ENCODE measurements at regions of chr18 and their contacts with region 1.

Region 1: DNA sequence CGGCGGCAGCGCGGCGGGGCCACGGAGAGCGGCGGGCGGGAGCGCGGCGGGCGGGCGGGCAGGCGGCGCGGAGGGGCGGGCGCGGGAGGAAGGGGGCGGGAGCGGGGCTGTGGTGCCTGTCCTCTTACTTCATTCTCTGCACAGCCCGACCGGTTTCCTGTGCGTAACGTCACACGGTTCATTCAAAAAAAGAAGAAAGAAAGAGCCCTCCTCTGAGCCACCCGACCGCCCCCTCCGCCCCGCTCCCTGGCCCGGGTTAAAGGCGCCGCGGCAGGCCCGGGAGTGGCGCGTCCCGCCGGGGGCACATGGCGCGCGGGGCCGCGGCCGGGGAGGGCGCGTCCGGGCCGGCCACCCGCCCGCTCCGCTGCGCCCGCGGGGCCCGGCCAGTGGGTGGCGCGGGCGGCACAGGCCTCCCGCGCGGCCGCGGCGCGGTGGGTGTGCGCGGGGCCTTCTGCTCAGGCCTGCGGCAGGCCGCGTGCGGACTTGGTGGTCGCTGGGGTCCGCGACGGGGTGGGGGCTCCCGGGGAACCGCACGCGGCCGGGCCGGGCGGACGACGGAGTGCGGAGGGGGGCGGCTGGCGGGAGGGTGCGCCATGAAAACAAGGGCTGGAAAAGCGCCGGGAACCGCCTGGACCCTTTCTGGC is 599 bp upstream of the BCL2 start:
- DNase-seq: peak; percentile 93
- ATAC-seq: peak; percentile 75
- H3K4me3 ChIP-seq: peak overlapping the region in 4 of 5 experiments; percentile 51 to 98 (median 88)
- H3K4me3 Mint-ChIP-seq: peak overlapping the region; percentile 95
- H3K27ac ChIP-seq: peak overlapping the region; percentile 52 to 92
- H3K27ac Mint-ChIP-seq: peak overlapping the region; percentile 96
- H3K4me1 ChIP-seq: peaks cover 18 to 34% of the 10 kb centered on the region in 2 donors
- H3K4me1 Mint-ChIP-seq: peaks cover 44% of the 10 kb centered on the region
- H3K27me3 ChIP-seq: no peaks in the 10 kb centered on the region
- H3K27me3 Mint-ChIP-seq: no peaks in the 10 kb centered on the region
- CTCF ChIP-seq: no peak

Region 2: GRCh38 chr18:63016270-63016669 is 303.9 kb before region 1 on chr18:
- CTCF ChIA-PET with region 1: interaction called, 223 read pairs
- POLR2A ChIA-PET with region 1: no interaction called
- intact Hi-C with region 1: no loop called
- DNase-seq: peak; percentile 74
- ATAC-seq: peak; percentile 60
- H3K4me3 ChIP-seq: no peak overlapping the region
- H3K4me3 Mint-ChIP-seq: no peak overlapping the region
- H3K27ac ChIP-seq: no peak overlapping the region
- H3K27ac Mint-ChIP-seq: no peak overlapping the region
- H3K4me1 ChIP-seq: no peaks in the 10 kb centered on the region
- H3K4me1 Mint-ChIP-seq: no peaks in the 10 kb centered on the region
- H3K27me3 ChIP-seq: no peaks in the 10 kb centered on the region
- H3K27me3 Mint-ChIP-seq: peaks cover 21% of the 10 kb centered on the region
- CTCF ChIP-seq: peak; percentile 86

Region 3: GRCh38 chr18:63131106-63131958 is 188.8 kb before region 1 on chr18:
- CTCF ChIA-PET with region 1: interaction called, 165 read pairs
- POLR2A ChIA-PET with region 1: interaction called, 19 read pairs
- intact Hi-C with region 1: loop called (anchors 1 kb)
- DNase-seq: peak; percentile 79
- ATAC-seq: peak; percentile 69
- H3K4me3 ChIP-seq: no peak overlapping the region
- H3K4me3 Mint-ChIP-seq: no peak overlapping the region
- H3K27ac ChIP-seq: peak overlapping the region in 1 of 2 donors; percentile 22
- H3K27ac Mint-ChIP-seq: peak overlapping the region; percentile 86
- H3K4me1 ChIP-seq: peaks cover 4 to 8% of the 10 kb centered on the region in 2 donors
- H3K4me1 Mint-ChIP-seq: peaks cover 30% of the 10 kb centered on the region
- H3K27me3 ChIP-seq: no peaks in the 10 kb centered on the region
- H3K27me3 Mint-ChIP-seq: no peaks in the 10 kb centered on the region
- CTCF ChIP-seq: peak; percentile 80

Region 4: DNA sequence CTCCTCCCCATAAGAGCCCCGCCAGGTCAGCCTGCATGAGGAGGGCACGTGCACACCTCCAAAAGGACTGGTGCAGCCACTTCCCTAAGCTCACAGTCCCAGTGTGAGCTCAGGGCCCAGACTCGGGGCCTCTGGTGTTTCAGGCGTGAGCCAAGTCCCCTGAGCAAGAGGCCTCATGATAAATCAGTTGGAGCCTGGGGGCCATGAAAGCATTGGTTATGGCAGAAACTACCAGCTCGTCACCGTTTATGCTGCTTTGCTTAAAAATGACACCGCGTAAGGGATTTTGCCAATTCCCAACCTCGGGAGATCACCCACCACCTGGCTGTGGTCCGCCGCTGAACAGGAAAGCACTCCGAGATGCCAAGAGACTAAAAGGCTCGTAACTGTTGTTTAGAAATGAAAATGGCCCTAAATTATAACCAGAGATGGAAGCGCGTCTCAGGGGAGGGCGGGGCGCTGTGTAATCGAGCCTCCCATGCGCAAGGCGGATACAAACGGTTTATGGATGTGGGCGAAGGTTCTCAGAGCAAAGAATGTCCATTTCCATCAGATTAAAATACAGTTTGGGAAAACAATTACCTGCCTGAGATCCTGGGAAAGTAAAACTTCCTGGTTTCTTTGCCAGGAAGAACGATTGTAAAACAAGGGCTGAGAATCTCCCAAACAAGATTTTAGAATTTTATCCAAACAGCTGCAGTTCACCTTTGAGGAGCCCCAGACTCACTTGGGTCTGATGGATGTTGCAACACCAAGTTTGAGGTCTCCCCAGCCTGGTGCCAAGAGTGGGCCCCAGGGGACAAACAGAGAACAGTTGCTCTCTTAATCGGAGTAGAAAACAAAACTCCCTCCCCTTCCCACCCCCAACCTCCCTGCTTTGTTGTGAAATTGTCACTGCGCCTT is 142.0 kb before region 1 on chr18:
- CTCF ChIA-PET with region 1: interaction called, 16 read pairs
- POLR2A ChIA-PET with region 1: interaction called, 4 read pairs
- intact Hi-C with region 1: no loop called
- DNase-seq: no peak
- ATAC-seq: no peak
- H3K4me3 ChIP-seq: no peak overlapping the region
- H3K4me3 Mint-ChIP-seq: no peak overlapping the region
- H3K27ac ChIP-seq: no peak overlapping the region
- H3K27ac Mint-ChIP-seq: peak overlapping the region; percentile 76
- H3K4me1 ChIP-seq: peaks cover 63 to 73% of the 10 kb centered on the region in 2 donors
- H3K4me1 Mint-ChIP-seq: peaks cover 89% of the 10 kb centered on the region
- H3K27me3 ChIP-seq: no peaks in the 10 kb centered on the region
- H3K27me3 Mint-ChIP-seq: no peaks in the 10 kb centered on the region
- CTCF ChIP-seq: no peak

Region 5: DNA sequence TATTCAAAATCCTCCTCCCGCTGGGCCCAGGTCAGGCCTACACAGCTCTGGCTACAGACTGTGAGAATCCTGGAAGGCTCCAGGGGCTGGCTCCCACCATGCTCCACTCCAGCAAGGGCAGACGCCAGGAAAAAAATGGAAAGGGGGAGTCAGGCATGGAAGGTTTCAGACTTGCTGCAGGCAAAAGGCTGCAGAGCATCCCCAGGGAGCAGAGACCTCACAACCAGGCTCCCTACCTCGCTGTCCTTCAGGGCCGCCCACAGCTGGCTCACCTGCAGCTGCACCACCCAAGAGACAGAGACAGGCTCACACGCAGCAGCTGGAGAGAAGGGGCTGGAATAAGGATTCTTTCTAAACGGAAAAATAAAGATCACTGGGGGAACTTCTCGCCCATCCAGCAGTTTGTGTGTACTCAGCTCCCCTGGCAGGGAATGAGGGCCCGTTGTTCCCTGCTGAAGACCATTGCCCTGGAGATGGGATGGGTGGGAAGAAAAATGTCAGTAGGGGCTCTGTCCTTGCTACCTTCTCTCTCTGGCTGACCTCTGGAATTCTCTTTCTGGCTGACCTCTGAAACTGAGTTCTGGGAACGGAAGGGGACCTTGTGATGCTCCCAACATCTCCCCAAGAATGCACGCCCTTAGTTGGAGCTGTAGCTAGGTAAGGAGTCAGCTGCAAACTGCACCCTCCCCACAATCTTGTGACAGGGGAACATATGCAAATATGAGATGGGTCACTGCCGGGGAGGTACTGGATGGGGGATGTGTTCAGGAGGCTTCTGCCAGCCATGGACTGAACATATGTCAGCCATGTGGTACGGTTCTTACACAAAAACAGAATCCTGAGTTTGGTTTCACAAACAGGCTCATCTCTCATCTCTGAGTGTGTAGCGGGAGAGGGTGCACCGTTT is 35.1 kb before region 1 on chr18:
- CTCF ChIA-PET with region 1: interaction called, 46 read pairs
- POLR2A ChIA-PET with region 1: interaction called, 3 read pairs
- intact Hi-C with region 1: no loop called
- DNase-seq: peak; percentile 82
- ATAC-seq: peak; percentile 95
- H3K4me3 ChIP-seq: peak overlapping the region in 4 of 5 experiments; percentile 15 to 51 (median 32)
- H3K4me3 Mint-ChIP-seq: no peak overlapping the region
- H3K27ac ChIP-seq: peak overlapping the region; percentile 93 to 95
- H3K27ac Mint-ChIP-seq: no peak overlapping the region
- H3K4me1 ChIP-seq: peaks cover 69 to 73% of the 10 kb centered on the region in 2 donors
- H3K4me1 Mint-ChIP-seq: peaks cover 24% of the 10 kb centered on the region
- H3K27me3 ChIP-seq: no peaks in the 10 kb centered on the region
- H3K27me3 Mint-ChIP-seq: no peaks in the 10 kb centered on the region
- CTCF ChIP-seq: no peak

Region 6: GRCh38 chr18:63367053-63367953 is 47.1 kb after region 1 on chr18 and contains the start of gene KDSR:
- CTCF ChIA-PET with region 1: interaction called, 6 read pairs
- POLR2A ChIA-PET with region 1: no interaction called
- intact Hi-C with region 1: loop called (anchors 2 kb)
- DNase-seq: peak; percentile 89
- ATAC-seq: peak; percentile 93
- H3K4me3 ChIP-seq: peak within 1 kb of the TSS; percentile 83 to 94 (median 85)
- H3K4me3 Mint-ChIP-seq: peak within 1 kb of the TSS; percentile 90
- H3K27ac ChIP-seq: peak within 1 kb of the TSS; percentile 51 to 71
- H3K27ac Mint-ChIP-seq: peak within 1 kb of the TSS; percentile 89
- H3K4me1 ChIP-seq: peaks cover 11 to 13% of the 10 kb centered on the region in 2 donors
- H3K4me1 Mint-ChIP-seq: peaks cover 26% of the 10 kb centered on the region
- H3K27me3 ChIP-seq: no peaks in the 10 kb centered on the region
- H3K27me3 Mint-ChIP-seq: no peaks in the 10 kb centered on the region
- CTCF ChIP-seq: no peak
- total RNA-seq, gene KDSR: 21.1 and 26.4 TPM in 2 replicates

Measured in B cell (primary cell).